Vagina (tissue), 2 donors: ENCODE measurements at regions of chr10 and their contacts with region 1.

Region 1: GRCh38 chr10:50624866-50625692 is 1.3 kb upstream of the SGMS1 start:
- DNase-seq: peak in 1 of 2 donors; percentile 92
- H3K4me3 ChIP-seq: peak overlapping the region; percentile 86 to 89
- H3K27ac ChIP-seq: peak overlapping the region; percentile 98
- H3K4me1 ChIP-seq: peaks cover 24% of the 10 kb centered on the region
- H3K27me3 ChIP-seq: no peaks in the 10 kb centered on the region
- CTCF ChIP-seq: peak; percentile 28 to 65 (median 35)
- POLR2A ChIP-seq: peak in 1 of 2 donors; percentile 3

Region 2: DNA sequence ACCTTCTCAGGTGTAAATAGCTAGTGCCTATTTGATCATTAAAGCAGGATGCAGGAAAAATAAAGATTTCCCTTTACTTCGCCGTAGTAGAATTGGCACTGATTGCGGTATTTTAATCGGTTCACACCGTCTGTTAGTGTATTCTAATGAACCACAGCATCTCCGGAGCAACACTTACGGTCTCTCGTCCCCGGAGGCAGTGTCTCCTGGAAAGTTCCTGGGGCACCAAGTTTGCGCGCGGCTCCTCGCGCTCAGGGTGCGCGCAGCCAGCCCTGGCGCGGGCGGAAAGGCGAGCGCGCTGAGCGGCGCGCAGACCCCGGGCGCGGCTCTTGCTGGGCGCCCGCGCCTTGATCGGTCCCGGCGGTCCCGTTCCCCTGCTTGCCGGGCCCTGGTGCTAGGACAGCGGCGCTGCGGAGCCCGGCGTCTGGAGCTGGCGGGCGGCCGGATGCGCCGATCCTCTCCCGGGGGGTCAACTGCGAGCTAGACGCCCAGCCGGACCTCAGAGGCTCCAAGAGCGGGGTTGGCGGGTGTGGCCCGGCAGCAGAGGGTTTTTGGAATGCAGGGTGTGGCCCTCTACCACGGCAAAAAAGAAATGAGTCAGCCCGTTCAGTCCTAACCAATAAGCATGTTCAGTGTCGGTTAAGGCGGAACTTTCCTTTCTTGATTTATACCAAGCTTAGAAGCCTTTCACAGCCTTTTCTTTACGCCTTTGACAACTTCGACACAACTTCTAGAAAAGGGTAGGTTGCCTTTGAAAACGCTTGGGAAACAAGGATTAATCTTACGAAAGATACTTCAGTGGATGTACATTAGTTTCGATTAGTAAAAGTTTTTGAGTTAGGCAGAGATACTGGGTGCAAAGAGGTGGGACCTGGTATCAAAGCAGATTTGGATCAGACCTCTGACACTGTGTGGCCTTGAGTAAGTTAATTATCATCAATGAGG is 206.9 kb before region 1 on chr10:
- intact Hi-C with region 1: loop called (anchors 10 kb)
- DNase-seq: no peak
- H3K4me3 ChIP-seq: peak overlapping the region; percentile 82 to 84
- H3K27ac ChIP-seq: peak overlapping the region; percentile 83
- H3K4me1 ChIP-seq: peaks cover 69% of the 10 kb centered on the region
- H3K27me3 ChIP-seq: no peaks in the 10 kb centered on the region
- CTCF ChIP-seq: no peak
- POLR2A ChIP-seq: no peak

Region 3: DNA sequence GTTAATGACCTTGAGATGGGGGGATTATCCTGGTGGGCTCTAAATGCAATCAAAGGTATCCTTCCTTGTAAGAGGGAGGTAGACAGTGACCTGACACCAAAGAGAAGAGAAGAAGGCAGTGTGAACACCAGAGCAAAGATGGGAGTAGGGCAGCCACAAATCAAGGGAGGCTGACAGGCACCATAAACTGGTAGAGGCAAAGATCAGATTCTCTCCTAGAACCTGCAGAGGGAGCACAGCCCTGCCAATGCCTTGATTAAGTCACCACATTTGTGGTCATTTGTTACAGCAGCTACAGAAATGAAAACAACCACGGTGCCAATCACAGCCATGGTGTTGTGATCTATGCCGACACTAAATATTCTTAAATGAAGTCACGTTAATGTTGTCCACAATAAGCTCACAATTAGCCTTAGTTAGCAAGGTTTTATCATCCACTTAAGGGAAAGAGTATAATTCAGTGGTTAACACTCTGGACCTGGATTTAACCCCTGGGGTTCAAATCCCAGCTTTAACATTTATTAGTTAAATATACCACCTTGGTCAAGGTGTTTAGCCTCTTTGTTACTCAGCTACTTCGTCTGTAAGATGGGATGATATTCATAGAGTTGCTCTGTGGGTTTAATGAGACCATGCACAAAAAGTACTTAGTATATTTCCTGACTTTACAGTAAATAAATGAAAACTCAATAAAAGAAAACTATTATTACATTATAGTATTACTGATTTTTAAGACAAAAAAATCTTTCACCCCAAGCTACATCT is 72.1 kb before region 1 on chr10:
- intact Hi-C with region 1: loop called (anchors 10 kb)
- DNase-seq: no peak
- H3K4me3 ChIP-seq: no peak overlapping the region
- H3K27ac ChIP-seq: no peak overlapping the region
- H3K4me1 ChIP-seq: peaks cover 51% of the 10 kb centered on the region
- H3K27me3 ChIP-seq: no peaks in the 10 kb centered on the region
- CTCF ChIP-seq: no peak
- POLR2A ChIP-seq: no peak